AG04449 (cell line): ENCODE measurements at regions of chr2 and their contacts with region 1.

Region 1: DNA sequence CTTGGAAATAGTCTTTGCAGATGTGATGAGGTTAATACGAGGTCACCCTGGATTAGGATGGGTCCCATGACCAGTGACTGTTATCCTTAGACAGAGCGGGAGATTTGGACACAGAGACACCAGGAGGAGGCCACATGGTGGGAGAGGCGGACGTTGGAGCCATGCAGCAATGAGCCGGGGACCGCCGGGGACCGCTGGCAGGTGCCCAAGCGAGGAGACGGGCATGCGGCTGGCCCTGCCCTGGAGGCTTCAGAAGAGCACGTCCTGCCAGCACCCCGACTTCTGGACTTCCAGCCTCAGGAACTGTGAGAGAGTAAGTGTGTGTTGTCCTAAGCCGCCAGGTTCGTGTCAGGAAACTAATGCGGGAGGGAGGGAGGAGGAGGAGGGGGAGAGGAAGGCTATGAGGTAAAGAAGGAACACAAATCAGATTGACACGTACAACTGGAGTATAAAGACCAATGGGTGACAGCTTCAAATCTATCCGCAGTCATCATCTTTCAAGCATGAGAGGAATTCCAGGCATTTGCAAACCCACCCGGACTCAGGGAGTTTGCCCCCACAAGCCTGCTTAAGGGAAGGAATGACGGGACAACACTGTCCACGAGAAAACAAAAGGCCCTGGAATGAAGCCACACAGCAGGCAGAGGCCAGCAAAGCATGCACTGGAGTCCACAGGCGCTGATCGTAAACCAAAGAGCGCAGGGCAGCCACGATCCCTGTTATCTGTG is 11.6 kb upstream of the BOK start:
- DNase-seq: peak; percentile 94
- H3K4me3 ChIP-seq: peak overlapping the region; percentile 19
- CTCF ChIP-seq: no peak

Region 2: DNA sequence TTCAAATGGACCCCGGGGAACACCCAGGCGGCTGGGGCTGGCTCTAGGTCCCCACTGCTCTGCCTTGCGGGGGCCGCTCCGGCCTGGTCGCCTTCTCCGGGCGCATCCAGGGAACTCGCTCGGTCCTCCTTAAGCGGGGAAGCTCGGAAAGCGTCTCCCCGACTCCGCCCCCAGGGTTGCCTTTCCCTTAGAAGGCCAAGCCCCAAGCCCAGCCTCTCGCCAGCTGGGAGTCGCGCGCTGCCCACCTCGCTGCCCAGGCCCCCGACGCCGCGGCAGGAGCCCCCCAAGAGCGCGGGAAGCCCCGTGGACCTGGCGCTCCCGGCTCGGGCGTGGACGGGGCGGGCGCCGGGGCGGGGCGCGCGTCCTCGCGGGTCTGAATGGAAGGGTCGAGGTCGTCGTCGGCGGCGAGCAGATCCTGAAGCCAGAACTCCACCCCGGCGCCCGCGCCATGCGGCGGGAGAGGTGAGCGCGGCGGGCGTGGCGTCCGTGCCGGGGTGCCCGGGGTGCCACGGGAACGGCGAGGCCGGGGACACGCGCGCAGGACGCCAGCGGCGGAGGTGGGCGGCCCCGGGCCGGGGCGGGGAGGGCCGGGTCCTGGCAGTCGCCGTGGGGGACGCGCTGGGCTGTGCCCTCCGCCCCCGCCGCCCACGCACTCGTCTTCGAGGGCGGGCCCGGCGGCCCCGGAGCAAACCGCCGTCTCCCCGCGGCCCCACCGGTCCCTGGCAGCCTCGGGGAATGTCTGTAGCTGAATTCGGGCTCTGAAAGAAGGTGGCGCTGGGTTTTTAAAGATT is 11.8 kb after region 1 on chr2 and contains the start of gene BOK:
- CTCF ChIA-PET with region 1: interaction called, 10 read pairs
- POLR2A ChIA-PET with region 1: interaction called, 12 read pairs
- DNase-seq: no peak
- H3K4me3 ChIP-seq: peak within 1 kb of the TSS; percentile 70
- CTCF ChIP-seq: no peak